Mammary epithelial cell (primary cell): ENCODE measurements at regions of chr2 and their contacts with region 1.

Region 1: DNA sequence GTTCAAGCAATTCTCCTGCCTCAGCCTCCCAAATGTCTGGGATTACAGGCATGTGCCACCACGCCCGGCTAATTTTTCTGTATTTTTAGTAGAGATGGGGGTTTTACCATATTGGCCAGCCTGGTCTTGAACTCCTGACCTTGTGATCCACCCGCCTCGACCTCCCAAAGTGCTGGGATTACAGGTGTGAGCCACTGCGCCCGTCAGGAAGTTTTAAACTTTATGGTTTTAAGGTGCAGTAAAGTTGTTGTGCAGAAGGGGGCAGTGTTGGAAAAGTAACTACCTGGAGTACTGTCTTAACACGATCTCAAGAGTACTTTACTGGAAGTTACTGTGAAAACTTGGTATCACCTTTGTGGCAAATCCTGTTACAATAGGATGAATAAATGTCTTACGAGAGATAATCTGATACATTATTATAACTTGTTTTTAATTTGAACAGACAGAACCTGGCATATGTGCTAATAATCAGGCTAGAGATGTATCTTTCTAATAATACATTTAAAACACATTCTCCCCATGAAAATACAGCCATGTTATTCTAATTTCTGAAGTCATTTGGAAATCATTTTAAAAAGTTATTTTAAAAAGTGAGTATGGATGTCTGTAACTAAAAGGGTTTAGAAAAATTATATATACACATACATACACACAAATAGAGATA is 10.8 kb downstream of the SPDYA start:
- DNase-seq: peak; percentile 64
- H3K4me3 ChIP-seq: no peak overlapping the region
- H3K27ac ChIP-seq: no peak overlapping the region
- H3K4me1 ChIP-seq: no peaks in the 10 kb centered on the region
- H3K27me3 ChIP-seq: no peaks in the 10 kb centered on the region
- CTCF ChIP-seq: peak; percentile 46 to 67

Region 2: DNA sequence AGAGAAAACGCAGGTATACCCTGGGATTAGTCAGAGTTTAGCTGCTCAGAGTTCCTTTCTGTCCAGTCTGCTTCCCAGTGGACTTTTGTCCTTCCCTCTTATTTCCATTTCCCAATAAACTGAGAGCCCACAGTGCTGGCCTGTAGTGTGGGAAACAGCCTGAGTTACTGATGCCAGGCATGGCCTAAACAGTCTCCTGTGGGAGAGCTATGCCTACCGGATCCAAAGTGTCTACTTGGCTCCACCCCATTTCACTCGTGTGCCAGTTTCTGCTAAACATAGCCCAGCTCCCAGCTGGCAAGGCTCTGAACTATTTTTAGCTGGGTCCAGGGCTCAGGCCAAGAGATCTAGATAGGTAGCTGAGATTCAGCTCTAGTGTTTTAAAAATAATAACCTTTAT is 85.4 kb before region 1 on chr2:
- CTCF ChIA-PET with region 1: no interaction called
- dilution Hi-C with region 1: no loop called
- in situ Hi-C with region 1: no loop called
- intact Hi-C with region 1: no loop called
- DNase-seq: peak; percentile 47
- H3K4me3 ChIP-seq: no peak overlapping the region
- H3K27ac ChIP-seq: no peak overlapping the region
- H3K4me1 ChIP-seq: no peaks in the 10 kb centered on the region
- H3K27me3 ChIP-seq: no peaks in the 10 kb centered on the region
- CTCF ChIP-seq: no peak

Region 3: DNA sequence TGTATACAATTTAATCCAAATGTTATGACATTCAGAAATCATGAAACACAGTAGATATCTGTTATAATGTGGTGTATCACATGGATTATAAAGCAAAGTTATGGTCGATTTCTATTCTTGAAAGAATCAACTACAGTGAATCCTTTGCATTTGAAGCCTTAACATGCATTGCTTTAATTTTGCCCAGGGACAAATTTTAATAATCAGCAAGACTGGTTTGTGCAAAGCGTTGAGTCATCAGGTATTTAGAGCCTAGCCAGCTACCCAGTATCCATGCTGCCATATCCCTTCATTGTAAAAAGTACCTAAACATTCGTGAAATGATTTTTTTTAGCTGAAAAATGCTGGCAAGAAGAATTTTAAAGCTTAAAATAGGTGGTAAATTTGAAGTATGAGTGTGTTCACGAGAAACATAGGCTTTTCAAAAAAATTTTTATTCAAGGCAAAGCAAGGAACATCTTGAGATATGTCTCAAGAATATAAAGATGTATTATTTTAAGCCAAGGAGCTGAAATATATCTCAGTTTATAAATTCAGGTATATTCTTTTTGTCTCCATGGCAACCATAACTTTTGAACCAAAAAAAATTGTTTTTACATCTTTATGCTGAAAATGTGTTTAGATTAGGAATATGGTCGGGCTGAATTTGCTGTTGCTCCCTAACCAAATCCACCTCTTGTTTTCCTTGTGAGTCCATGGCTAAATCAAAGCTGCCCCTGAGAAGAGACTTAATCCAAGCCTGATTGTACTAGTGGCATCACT is 19.5 kb before region 1 on chr2:
- CTCF ChIA-PET with region 1: interaction called, 19 read pairs
- dilution Hi-C with region 1: no loop called
- in situ Hi-C with region 1: no loop called
- intact Hi-C with region 1: no loop called
- DNase-seq: peak; percentile 60
- H3K4me3 ChIP-seq: no peak overlapping the region
- H3K27ac ChIP-seq: peak overlapping the region; percentile 36
- H3K4me1 ChIP-seq: peaks cover 14% of the 10 kb centered on the region
- H3K27me3 ChIP-seq: no peaks in the 10 kb centered on the region
- CTCF ChIP-seq: no peak

Region 4: DNA sequence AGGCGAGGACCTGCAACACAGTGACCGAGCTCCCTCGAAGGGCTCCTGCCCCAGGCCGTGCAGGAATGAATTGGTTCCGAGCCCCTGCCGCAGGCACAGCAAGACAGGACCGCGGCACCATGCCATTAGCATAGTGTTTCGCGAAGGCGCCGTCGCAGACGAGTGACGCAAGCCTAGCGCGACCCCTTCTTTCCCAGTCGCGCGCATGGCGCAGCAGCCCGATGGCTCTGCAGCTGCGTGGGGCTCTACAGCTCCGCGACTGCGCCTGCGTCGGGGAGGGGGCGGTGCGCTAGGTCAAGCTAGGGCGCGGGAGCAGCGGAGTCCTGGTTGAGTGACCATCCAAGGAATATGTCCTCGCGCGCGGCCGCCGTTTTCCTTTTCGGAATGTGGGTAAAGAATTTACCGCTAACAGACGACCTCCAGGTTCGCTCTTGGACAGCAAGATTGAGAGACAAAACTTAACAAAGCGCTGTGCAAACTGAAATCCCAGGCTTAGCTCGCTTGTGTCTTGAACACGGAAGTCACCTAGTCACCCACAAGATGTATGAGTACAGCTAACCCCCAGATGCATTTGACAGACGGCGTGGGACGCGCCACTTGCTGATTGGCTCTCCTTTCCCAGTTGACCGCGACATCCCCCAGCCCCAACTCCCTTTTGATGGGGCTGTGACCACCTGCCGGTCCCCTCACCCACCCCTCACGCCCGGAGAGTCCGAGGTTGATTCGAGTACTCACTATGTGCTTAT is 48.9 kb after region 1 on chr2 and contains the start of gene TRMT61B:
- CTCF ChIA-PET with region 1: no interaction called
- dilution Hi-C with region 1: no loop called
- in situ Hi-C with region 1: no loop called
- intact Hi-C with region 1: no loop called
- DNase-seq: peak; percentile 93
- H3K4me3 ChIP-seq: peak within 1 kb of the TSS; percentile 63 to 95 (median 91)
- H3K27ac ChIP-seq: peak within 1 kb of the TSS; percentile 85
- H3K4me1 ChIP-seq: peaks cover 13% of the 10 kb centered on the region
- H3K27me3 ChIP-seq: no peaks in the 10 kb centered on the region
- CTCF ChIP-seq: no peak
- total RNA-seq, gene TRMT61B: 13.7 to 14.7 TPM

Region 5: GRCh38 chr2:28894470-28895177 is 73.2 kb after region 1 on chr2 and contains the start of gene WDR43:
- CTCF ChIA-PET with region 1: no interaction called
- dilution Hi-C with region 1: no loop called
- in situ Hi-C with region 1: no loop called
- intact Hi-C with region 1: loop called (anchors 1 kb)
- DNase-seq: peak; percentile 98
- H3K4me3 ChIP-seq: peak within 1 kb of the TSS; percentile 74 to 99 (median 98)
- H3K27ac ChIP-seq: peak within 1 kb of the TSS; percentile 76
- H3K4me1 ChIP-seq: peaks cover 21% of the 10 kb centered on the region
- H3K27me3 ChIP-seq: no peaks in the 10 kb centered on the region
- CTCF ChIP-seq: no peak
- total RNA-seq, gene WDR43: 106 to 122 TPM

Region 6: GRCh38 chr2:29014811-29015421 is 193.5 kb after region 1 on chr2:
- CTCF ChIA-PET with region 1: no interaction called
- dilution Hi-C with region 1: no loop called
- in situ Hi-C with region 1: no loop called
- intact Hi-C with region 1: loop called (anchors 5 kb)
- DNase-seq: peak; percentile 34
- H3K4me3 ChIP-seq: no peak overlapping the region
- H3K27ac ChIP-seq: no peak overlapping the region
- H3K4me1 ChIP-seq: no peaks in the 10 kb centered on the region
- H3K27me3 ChIP-seq: no peaks in the 10 kb centered on the region
- CTCF ChIP-seq: no peak

Region 7: GRCh38 chr2:29196792-29197788 is 375.7 kb after region 1 on chr2:
- CTCF ChIA-PET with region 1: no interaction called
- dilution Hi-C with region 1: no loop called
- in situ Hi-C with region 1: no loop called
- intact Hi-C with region 1: loop called (anchors 10 kb)
- DNase-seq: peak; percentile 49
- H3K4me3 ChIP-seq: no peak overlapping the region
- H3K27ac ChIP-seq: no peak overlapping the region
- H3K4me1 ChIP-seq: no peaks in the 10 kb centered on the region
- H3K27me3 ChIP-seq: no peaks in the 10 kb centered on the region
- CTCF ChIP-seq: peak; percentile 78 to 85